Mammary epithelial cell (primary cell): ENCODE measurements at regions of chr21 and their contacts with region 1.

Region 1: GRCh38 chr21:29287383-29287782 is 11.3 kb upstream of the BACH1 start:
- DNase-seq: no peak
- H3K4me3 ChIP-seq: no peak overlapping the region
- H3K27ac ChIP-seq: no peak overlapping the region
- H3K4me1 ChIP-seq: no peaks in the 10 kb centered on the region
- H3K27me3 ChIP-seq: no peaks in the 10 kb centered on the region
- CTCF ChIP-seq: no peak

Region 2: GRCh38 chr21:28357743-28358142 is 929.6 kb before region 1 on chr21:
- CTCF ChIA-PET with region 1: no interaction called
- dilution Hi-C with region 1: no loop called
- in situ Hi-C with region 1: no loop called
- intact Hi-C with region 1: no loop called
- DNase-seq: no peak
- H3K4me3 ChIP-seq: no peak overlapping the region
- H3K27ac ChIP-seq: no peak overlapping the region
- H3K4me1 ChIP-seq: no peaks in the 10 kb centered on the region
- H3K27me3 ChIP-seq: no peaks in the 10 kb centered on the region
- CTCF ChIP-seq: no peak

Region 3: DNA sequence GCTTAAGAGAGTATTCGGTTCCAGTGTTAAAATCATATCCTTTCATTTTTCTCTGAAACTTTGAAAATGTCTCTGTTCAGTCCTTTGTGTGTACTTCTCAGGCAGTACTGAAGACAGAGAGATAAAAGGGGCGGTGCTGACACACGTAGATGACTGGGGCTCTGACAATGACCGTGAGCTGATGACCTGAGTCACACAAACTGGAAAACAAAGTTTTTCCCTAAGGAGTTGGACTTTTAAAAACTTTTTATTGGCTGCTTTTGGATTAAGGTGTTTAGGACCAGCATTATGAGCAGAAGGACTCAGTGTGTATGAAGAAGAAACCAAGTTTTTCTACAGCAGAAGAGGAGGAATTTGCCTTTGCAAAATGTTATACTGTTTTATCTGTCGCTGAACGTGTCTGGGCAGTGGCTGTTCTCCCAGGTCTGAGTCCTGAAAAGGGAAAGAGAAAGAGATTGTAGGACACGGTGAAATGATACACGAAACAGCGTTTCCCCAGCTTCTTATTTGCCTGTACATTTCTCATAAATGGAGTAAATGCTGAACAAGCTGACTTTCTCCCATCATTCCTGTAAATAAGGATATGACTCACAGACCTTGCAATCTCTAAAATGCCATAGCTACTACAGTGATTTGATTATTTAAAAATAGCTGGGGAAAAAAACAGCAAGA is 105.4 kb before region 1 on chr21:
- CTCF ChIA-PET with region 1: no interaction called
- dilution Hi-C with region 1: no loop called
- in situ Hi-C with region 1: no loop called
- intact Hi-C with region 1: no loop called
- DNase-seq: peak; percentile 64
- H3K4me3 ChIP-seq: peak overlapping the region; percentile 40 to 54 (median 49)
- H3K27ac ChIP-seq: peak overlapping the region; percentile 95
- H3K4me1 ChIP-seq: peaks cover 25% of the 10 kb centered on the region
- H3K27me3 ChIP-seq: no peaks in the 10 kb centered on the region
- CTCF ChIP-seq: no peak

Region 4: DNA sequence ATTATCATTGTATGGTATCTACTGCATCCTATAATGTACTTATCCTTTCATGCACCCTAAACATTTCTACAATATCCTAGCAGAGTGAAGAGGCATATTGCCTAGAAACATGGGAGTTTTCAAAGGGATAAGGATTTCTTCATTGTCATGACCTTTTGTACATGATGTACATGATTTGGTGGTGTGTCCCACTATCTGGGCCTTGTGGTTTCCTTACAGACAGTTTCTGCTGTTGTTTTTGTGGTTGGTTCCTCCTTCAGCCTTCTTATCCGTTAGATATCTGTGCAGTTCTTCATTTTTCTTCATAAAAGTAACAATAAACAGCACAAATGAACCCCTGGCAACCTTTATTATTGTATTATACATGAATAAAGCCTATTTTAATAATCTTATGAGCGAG is 59.1 kb before region 1 on chr21:
- CTCF ChIA-PET with region 1: no interaction called
- dilution Hi-C with region 1: loop called (anchors 5 kb)
- in situ Hi-C with region 1: no loop called
- intact Hi-C with region 1: no loop called
- DNase-seq: no peak
- H3K4me3 ChIP-seq: no peak overlapping the region
- H3K27ac ChIP-seq: no peak overlapping the region
- H3K4me1 ChIP-seq: peaks cover 7% of the 10 kb centered on the region
- H3K27me3 ChIP-seq: no peaks in the 10 kb centered on the region
- CTCF ChIP-seq: no peak